ENCODE measurements at regions of chr22 and their contacts with region 1.

Region 1: GRCh38 chr22:38143036-38143697 is 32.7 kb upstream of the BAIAP2L2 start:
- DNase-seq: no peak
- ATAC-seq: peak in 1 of 8 donors; percentile 41
- H3K4me3 ChIP-seq: no peak overlapping the region
- H3K27ac ChIP-seq: no peak overlapping the region
- H3K4me1 ChIP-seq: peaks cover 0 to 16% (median 0%) of the 10 kb centered on the region in 9 donors
- H3K27me3 ChIP-seq: no peaks in the 10 kb centered on the region
- CTCF ChIP-seq: no peak

Region 2: GRCh38 chr22:38338772-38339379 is 195.7 kb after region 1 on chr22:
- intact Hi-C with region 1: loop called in 1 of 10 experiments (anchors 10 kb)
- DNase-seq: no peak
- ATAC-seq: no peak
- H3K4me3 ChIP-seq: no peak overlapping the region
- H3K27ac ChIP-seq: no peak overlapping the region
- H3K4me1 ChIP-seq: peaks cover 0 to 13% (median 9%) of the 10 kb centered on the region in 9 donors
- H3K27me3 ChIP-seq: peaks cover 0 to 40% (median 0%) of the 10 kb centered on the region in 7 donors
- CTCF ChIP-seq: no peak